Activated CD8-positive, alpha-beta T cell treated with anti-CD3 and anti-CD28 coated beads for 36 hours (primary cell): ENCODE measurements at regions of chr12 and their contacts with region 1.

Region 1: GRCh38 chr12:54439521-54440255 is 20.6 kb upstream of the ITGA5 start:
- DNase-seq: no peak
- ATAC-seq: peak; percentile 88
- H3K4me3 Mint-ChIP-seq: no peak overlapping the region
- H3K27ac Mint-ChIP-seq: no peak overlapping the region
- H3K4me1 Mint-ChIP-seq: peaks cover 10% of the 10 kb centered on the region
- H3K27me3 Mint-ChIP-seq: no peaks in the 10 kb centered on the region
- CTCF ChIP-seq: peak; percentile 91

Region 2: DNA sequence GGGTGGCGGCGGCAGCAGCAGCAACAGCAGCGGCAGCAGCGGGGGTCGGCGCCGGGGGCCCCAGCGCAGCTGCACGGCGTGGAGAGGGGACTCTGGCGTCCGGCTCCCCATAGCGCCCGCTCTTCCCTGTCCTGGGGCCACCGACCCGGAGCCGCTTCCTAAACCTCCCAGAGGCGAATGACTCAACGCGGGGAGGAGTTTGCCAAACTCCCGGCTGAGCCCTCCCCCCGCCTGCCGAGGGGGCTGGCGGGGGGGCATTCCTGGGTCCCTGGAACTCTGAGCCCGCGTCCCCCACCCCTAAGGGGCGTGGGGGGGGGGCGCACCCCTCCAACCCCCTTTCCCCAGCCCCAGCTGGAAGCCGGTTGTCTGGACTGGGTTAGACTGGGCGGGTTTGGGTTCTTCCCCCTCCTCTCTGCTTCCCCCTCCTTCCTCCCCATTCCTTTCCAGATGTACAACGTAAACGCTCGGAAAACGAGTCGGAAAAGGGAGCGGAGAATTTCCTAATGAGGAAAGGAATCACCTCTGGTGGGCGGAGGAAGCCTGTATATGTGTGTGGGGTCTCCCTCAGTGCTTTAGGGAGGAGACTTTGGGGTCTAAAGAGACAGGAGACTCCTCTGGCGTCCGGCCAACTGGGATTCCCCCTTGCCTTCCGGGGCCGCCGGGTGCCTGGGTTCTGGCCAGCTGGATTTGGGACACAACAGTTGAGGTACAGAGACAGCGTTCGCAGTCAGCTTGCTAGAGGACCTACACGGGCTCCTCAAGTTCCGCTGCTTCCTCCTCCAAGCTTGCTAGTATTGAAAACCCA is 20.4 kb before region 1 on chr12 and contains the start of gene ITGA5:
- CTCF ChIA-PET with region 1: interaction called, 164 read pairs
- POLR2A ChIA-PET with region 1: interaction called, 5 read pairs
- intact Hi-C with region 1: no loop called
- DNase-seq: peak; percentile 44
- ATAC-seq: peak; percentile 34
- H3K4me3 Mint-ChIP-seq: peak within 1 kb of the TSS; percentile 89
- H3K27ac Mint-ChIP-seq: peak within 1 kb of the TSS; percentile 94
- H3K4me1 Mint-ChIP-seq: peaks cover 58% of the 10 kb centered on the region
- H3K27me3 Mint-ChIP-seq: no peaks in the 10 kb centered on the region
- CTCF ChIP-seq: no peak
- total RNA-seq, gene ITGA5: 35.2 to 36.6 TPM

Region 3: DNA sequence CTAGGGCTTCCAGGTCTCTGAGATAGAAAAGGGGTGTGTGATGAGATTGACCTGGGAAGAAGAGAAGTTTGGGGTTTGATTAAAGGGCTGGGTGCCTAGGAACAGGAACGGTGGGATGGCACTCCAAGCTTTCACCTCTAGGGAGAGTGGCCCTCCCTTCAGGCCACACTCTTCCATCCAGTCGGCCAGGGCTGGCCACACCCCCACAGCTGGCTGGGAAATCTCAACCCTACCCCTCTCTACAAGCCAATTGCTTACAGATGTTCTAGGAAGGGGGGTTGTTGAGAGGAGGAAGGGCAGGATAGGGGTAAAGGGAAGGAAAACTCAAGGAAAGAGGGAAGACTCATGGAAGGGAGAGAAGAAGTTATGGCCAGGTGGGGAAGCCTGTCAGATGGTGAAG is 14.0 kb before region 1 on chr12:
- CTCF ChIA-PET with region 1: interaction called, 164 read pairs
- POLR2A ChIA-PET with region 1: interaction called, 5 read pairs
- intact Hi-C with region 1: no loop called
- DNase-seq: no peak
- ATAC-seq: no peak
- H3K4me3 Mint-ChIP-seq: no peak overlapping the region
- H3K27ac Mint-ChIP-seq: no peak overlapping the region
- H3K4me1 Mint-ChIP-seq: peaks cover 21% of the 10 kb centered on the region
- H3K27me3 Mint-ChIP-seq: peaks cover 2% of the 10 kb centered on the region
- CTCF ChIP-seq: no peak

Region 4: DNA sequence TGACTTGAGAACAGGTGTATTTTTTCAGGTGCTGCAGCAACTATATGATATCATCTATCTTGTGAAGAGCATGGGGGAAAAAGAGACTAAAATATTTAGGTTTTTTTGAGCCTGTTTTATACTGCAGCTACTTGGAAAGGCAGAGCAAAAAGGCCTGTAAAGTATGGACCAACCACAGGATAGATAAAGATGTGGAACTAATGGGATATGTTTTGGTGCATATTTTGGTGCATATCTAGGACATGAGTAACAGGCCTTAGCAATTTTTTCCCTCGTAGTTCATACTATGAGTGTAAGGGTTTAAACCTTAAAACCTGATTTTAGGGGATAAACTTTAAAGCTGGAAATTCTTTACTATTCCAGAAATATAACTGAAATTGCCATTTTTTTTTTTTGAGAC is 39.7 kb after region 1 on chr12:
- CTCF ChIA-PET with region 1: no interaction called
- POLR2A ChIA-PET with region 1: no interaction called
- intact Hi-C with region 1: no loop called
- DNase-seq: no peak
- ATAC-seq: no peak
- H3K4me3 Mint-ChIP-seq: no peak overlapping the region
- H3K27ac Mint-ChIP-seq: no peak overlapping the region
- H3K4me1 Mint-ChIP-seq: no peaks in the 10 kb centered on the region
- H3K27me3 Mint-ChIP-seq: peaks cover 4% of the 10 kb centered on the region
- CTCF ChIP-seq: no peak

Region 5: DNA sequence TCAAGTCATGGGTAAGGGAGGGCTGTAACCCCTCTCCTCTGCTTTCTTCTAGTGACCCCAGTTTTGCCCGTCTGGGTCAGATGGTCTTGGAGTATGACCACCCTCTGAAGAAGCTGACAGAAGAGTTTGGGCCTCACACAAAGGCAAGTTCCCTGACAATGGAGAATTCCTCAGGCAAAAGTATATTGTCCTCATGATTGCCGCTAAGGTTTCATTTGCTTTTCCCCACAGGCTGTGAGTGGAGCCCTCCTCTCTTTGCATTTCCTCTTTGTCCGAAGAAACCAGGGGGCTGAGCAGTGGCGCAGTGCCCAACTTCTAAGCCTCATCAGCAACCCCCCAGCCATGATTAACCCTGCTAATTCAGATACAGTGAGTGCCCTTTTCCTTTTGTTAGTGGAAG is 69.9 kb after region 1 on chr12:
- CTCF ChIA-PET with region 1: no interaction called
- POLR2A ChIA-PET with region 1: no interaction called
- intact Hi-C with region 1: no loop called
- DNase-seq: no peak
- ATAC-seq: no peak
- H3K4me3 Mint-ChIP-seq: no peak overlapping the region
- H3K27ac Mint-ChIP-seq: no peak overlapping the region
- H3K4me1 Mint-ChIP-seq: peaks cover 12% of the 10 kb centered on the region
- H3K27me3 Mint-ChIP-seq: no peaks in the 10 kb centered on the region
- CTCF ChIP-seq: no peak

Region 6: DNA sequence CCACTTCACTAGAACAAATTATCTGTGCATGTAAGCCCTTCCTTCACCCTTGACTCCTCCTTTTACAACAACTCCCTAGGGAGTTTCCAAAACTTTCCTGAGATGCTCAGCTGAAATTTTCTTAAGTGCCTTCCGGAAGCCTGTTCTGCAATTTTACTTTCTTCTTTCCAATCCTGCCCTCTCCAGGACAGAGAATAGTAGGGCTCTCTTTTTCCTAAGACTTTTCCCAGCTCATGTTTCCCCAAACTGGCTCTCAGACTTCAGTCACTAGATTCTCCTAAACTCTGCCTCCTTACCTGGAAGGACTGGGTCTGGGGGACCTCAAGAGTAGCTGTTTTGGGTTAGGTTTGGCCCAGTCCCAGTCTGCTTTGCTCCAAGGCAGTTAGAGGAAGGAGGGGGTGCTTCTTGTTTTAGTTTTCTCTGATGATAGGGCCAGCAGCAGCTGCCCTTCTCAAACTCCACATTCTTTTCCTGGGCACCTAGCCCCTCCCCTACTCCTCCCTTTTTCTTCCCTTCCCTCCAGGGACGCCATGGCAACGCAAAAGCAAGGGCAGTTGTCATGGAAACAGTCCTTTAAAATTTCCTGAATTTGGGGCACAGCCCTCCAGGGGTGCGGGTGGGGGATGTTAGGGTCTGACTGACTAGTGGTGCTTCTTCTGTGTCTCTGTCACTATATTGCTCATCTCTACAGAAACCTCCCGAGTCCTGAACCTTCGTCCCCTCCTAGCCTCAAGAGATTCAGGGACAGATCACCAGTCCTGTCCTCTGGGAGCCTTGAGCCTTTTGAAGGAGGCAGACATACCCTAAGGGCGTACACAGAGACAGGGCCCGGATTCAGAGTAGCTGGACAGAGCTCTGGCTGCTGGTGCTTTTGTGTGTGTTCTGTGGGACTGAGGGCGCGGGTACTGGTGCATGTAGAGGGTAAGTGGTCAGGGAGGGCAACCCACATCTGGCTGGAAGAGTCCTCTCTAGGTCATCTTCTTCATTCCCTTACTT is 131.8 kb after region 1 on chr12:
- CTCF ChIA-PET with region 1: no interaction called
- POLR2A ChIA-PET with region 1: no interaction called
- intact Hi-C with region 1: no loop called
- DNase-seq: no peak
- ATAC-seq: no peak
- H3K4me3 Mint-ChIP-seq: no peak overlapping the region
- H3K27ac Mint-ChIP-seq: no peak overlapping the region
- H3K4me1 Mint-ChIP-seq: no peaks in the 10 kb centered on the region
- H3K27me3 Mint-ChIP-seq: no peaks in the 10 kb centered on the region
- CTCF ChIP-seq: no peak